GM12878 (cell line): ENCODE measurements at regions of chr14 and their contacts with region 1.

Region 1: DNA sequence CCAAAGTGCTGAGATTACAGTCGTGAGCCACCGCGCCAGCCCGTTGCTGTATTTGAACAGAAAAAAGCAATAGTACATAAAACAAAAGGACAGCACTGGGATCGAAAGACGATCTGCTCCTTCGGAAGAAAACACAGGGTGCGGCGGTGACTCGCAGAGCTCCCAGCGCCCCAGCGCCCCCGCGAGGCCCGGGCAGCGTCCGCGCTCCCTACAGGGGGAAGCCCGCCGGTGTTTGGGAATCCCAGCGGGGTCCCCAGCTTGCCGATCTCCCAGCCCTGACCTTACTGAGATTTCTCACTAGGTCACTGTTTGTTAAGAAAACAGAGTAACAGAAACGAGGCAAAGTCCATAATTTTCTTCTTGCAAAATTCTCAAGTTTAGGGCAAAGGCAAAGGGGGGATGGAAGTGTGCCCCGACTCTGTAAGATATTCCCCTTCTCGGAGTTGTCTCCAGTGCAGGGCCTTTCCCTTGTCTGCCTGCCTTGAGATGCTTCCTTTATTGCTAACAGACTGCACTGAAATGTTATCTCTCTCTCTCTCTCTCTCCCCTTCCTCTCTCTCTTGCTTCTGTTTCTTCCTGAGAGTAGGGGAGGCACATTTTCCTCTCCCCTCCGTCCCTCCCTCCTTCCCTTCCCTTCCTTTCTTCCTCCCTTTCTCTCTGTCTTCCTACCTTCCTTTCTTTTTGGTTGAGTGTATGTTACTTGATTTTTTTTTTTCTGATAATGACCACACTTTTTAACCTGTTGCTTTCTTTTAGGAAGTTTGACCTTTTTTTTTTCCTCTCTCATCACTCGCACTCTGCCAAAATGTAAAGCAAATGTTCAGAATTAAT is 91.9 kb downstream of the TMEM30B start:
- DNase-seq: no peak
- ATAC-seq: peak; percentile 89
- H3K4me3 ChIP-seq: peak overlapping the region; percentile 41; the same call in 1 of the 2 replicates
- H3K27ac ChIP-seq: no peak overlapping the region
- H3K4me1 ChIP-seq: no peaks in the 10 kb centered on the region
- H3K27me3 ChIP-seq: peaks cover 3% of the 10 kb centered on the region in 2 experiments
- CTCF ChIP-seq: peak; percentile 38 to 67 (median 56)
- EP300 ChIP-seq: no peak
- POLR2A ChIP-seq: no peak
- RAD21 ChIP-seq: peak; percentile 40

Region 2: GRCh38 chr14:61229475-61229888 is 40.3 kb after region 1 on chr14:
- CTCF ChIA-PET with region 1: no interaction called
- POLR2A ChIA-PET with region 1: no interaction called
- RAD21 ChIA-PET with region 1: no interaction called
- SMC1A ChIA-PET with region 1: no interaction called
- in situ Hi-C with region 1: no loop called
- intact Hi-C with region 1: loop called (anchors 5 kb)
- DNase-seq: no peak
- ATAC-seq: no peak
- H3K4me3 ChIP-seq: no peak overlapping the region
- H3K27ac ChIP-seq: no peak overlapping the region
- H3K4me1 ChIP-seq: no peaks in the 10 kb centered on the region
- H3K27me3 ChIP-seq: peaks cover 0 to 4% of the 10 kb centered on the region in 2 experiments; a peak in 2 of 4 replicates
- CTCF ChIP-seq: no peak
- EP300 ChIP-seq: no peak
- POLR2A ChIP-seq: no peak
- RAD21 ChIP-seq: no peak